Activated T-helper 1 cell treated with anti-CD3 and anti-CD28 coated beads, Interleukin-12 subunit alpha, Interleukin-12 subunit beta, Interleukin-2, Interleukin-4 antibody, amounts not matched to agents 30 ng/mL and 10 ng/mL and 1 ng/mL, durations not matched to agents 14 hours and 24 hours and 36 hours (primary cell): ENCODE measurements at regions of chr1 and their contacts with region 1.

Region 1: DNA sequence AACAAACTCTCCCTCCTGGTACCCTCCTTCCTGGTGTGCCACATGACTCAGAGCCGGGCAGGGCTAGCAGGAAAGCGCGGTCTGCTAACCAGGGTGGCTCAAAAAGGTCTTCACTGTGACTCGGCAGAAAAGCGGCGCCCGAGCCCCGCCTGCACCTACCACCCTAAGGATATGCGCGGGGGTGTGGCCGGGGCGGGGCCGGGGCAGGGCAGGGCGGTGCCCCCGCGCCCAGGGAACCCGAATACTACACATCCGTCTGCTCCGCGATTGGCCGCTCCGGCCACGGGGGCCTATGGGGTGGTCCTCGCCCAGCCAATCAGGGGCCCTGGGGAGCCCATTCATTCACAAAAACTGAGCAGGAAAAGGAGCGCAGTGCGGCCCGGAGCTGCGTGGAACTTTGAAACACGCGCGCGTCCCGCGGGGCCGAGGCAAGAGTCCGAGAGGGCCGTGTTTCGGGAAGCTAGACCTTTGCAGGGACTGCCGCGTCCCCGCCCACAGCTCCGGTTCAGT is 1.7 kb downstream of the LRP8 start:
- DNase-seq: peak; percentile 94
- H3K4me3 Mint-ChIP-seq: peak overlapping the region; percentile 96
- H3K27ac Mint-ChIP-seq: peak overlapping the region; percentile 96
- H3K4me1 Mint-ChIP-seq: peaks cover 44% of the 10 kb centered on the region
- H3K27me3 Mint-ChIP-seq: no peaks in the 10 kb centered on the region

Region 2: GRCh38 chr1:51729156-51729823 is 1596.9 kb before region 1 on chr1:
- intact Hi-C with region 1: loop called (anchors 5 kb)
- DNase-seq: peak; percentile 94
- H3K4me3 Mint-ChIP-seq: peak overlapping the region; percentile 84
- H3K27ac Mint-ChIP-seq: peak overlapping the region; percentile 88
- H3K4me1 Mint-ChIP-seq: peaks cover 24% of the 10 kb centered on the region
- H3K27me3 Mint-ChIP-seq: no peaks in the 10 kb centered on the region

Region 3: DNA sequence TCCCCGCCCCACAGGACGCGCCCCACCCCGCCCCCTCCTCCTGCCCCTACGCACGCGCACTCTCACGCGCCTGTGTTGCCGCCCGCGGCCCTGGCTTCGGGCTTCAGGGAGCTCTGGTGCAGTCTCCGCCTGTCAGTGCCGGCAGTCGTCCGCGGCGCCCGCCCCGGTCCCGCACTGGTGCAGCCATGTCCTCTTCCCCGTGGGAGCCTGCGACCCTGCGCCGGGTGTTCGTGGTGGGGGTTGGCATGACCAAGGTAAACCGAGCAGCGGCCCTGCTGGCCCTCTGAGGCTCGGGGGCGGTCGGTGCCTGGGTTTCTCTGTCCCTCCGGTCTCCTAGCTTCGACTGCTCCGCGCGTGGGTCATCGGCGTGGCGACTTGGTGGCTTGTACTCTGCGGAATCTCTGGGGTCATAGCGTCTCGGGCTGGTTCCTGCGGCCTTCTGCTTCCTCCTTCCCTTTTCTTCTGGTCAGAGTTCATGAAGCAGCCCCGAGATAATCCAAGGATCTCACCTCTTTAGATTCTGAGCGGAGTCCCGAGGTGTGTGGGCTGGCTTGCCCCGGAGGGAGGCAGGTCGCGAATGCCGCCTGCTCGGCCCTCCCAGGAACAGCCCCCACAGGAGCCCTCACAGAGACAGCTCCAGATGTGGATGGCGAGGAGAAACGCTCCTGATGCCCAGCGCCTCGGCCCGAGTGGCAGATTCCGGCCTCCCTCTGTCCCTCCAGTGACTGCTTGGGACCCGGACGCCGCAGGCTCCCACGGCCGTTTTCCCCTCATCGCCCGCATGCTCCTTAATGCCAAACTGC is 398.7 kb before region 1 on chr1 and contains the start of gene SCP2:
- intact Hi-C with region 1: loop called (anchors 5 kb)
- DNase-seq: peak; percentile 74
- H3K4me3 Mint-ChIP-seq: peak within 1 kb of the TSS; percentile 90
- H3K27ac Mint-ChIP-seq: peak within 1 kb of the TSS; percentile 83
- H3K4me1 Mint-ChIP-seq: peaks cover 15% of the 10 kb centered on the region
- H3K27me3 Mint-ChIP-seq: peaks cover 8% of the 10 kb centered on the region
- total RNA-seq, gene SCP2: 54.7 and 58.3 TPM in 2 replicates

Region 4: DNA sequence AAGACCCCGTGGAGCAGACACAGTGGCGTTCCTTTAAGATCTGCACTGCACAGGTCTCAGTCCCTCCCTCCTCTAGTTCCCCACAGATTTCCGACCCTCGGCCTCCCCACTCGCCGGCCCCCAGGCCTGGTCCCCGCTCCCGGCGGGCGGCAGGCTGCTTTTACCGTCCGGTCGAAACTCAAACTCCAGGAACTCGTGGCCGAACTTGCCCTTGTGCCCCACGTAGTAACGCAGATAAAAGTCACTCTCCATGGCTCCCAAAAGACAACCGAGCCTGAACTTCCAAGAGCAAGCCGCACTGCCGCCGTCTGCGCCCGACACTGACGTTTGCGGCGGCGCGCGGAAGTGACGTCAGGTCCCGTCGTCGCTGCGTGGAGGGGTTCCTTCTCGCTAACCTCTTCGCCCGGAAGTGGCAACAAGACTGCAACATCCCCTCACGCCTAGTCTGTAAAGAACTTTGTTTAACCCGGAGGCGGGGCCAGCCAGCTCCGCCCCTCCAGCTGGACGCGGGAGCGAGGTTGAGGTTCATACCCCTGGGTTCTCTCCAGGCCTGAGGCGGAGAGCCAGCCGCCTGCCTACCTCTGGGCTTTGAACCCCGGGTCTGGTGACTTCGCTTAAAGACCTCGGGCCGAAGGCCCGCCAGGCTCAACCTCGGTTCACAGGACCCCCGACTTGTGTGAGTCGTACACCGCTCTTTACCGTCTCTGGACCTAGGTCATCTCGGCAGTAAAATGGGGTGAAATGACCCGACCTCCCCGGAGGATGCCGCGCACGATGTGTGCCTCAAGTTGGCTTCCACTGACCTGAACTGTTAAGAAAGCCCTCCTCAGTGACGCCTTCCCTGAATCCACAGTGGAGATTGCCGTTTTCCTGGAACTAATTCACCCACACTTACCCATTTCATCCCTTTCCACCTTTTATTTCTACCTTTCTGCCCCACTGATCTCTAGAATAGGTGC is 87.7 kb before region 1 on chr1 and contains the start of gene MAGOH:
- intact Hi-C with region 1: loop called (anchors 1 kb)
- DNase-seq: peak; percentile 93
- H3K4me3 Mint-ChIP-seq: peak within 1 kb of the TSS; percentile 97
- H3K27ac Mint-ChIP-seq: peak within 1 kb of the TSS; percentile 98
- H3K4me1 Mint-ChIP-seq: peaks cover 28% of the 10 kb centered on the region
- H3K27me3 Mint-ChIP-seq: no peaks in the 10 kb centered on the region
- total RNA-seq, gene MAGOH: 104 TPM in 2 replicates

Region 5: DNA sequence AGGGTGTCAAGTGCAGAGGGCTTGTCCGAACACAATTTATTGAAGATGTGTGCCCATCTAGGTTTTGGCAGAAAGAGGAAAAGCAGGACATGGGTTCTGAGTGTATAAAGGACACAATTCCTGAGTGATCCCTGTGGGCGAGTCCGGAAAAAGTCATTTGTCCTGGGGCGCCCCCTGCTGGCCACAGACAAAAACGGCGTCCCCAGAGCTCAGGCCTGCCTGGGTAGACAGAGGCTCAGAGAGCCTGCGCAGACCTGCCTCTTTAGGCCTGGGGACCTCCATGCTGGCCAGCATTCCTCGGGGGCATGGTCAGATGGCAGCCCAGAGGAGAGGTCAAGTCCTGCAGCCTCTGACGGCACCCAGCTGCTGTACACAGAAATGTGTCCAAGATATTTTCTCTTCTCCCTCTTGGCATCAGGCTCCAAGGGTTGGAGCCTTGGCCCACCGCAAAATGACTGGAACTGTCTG is 67.2 kb after region 1 on chr1:
- intact Hi-C with region 1: loop called (anchors 1 kb)
- DNase-seq: peak; percentile 61
- H3K4me3 Mint-ChIP-seq: no peak overlapping the region
- H3K27ac Mint-ChIP-seq: no peak overlapping the region
- H3K4me1 Mint-ChIP-seq: peaks cover 21% of the 10 kb centered on the region
- H3K27me3 Mint-ChIP-seq: peaks cover 2% of the 10 kb centered on the region

Region 6: GRCh38 chr1:53945433-53946251 is 619.5 kb after region 1 on chr1 and contains the start of gene IFT25:
- intact Hi-C with region 1: loop called (anchors 5 kb)
- DNase-seq: peak; percentile 95
- H3K4me3 Mint-ChIP-seq: peak within 1 kb of the TSS; percentile 90
- H3K27ac Mint-ChIP-seq: peak within 1 kb of the TSS; percentile 89
- H3K4me1 Mint-ChIP-seq: peaks cover 61% of the 10 kb centered on the region
- H3K27me3 Mint-ChIP-seq: no peaks in the 10 kb centered on the region
- total RNA-seq, gene IFT25: 50.2 and 52.6 TPM in 2 replicates